ENCODE measurements at regions of chr19 and their contacts with region 1.

Region 1: GRCh38 chr19:4328243-4328990 is 10.2 kb downstream of the STAP2 start:
- DNase-seq: peak; percentile 84 to 100 (median 96)

Region 2: DNA sequence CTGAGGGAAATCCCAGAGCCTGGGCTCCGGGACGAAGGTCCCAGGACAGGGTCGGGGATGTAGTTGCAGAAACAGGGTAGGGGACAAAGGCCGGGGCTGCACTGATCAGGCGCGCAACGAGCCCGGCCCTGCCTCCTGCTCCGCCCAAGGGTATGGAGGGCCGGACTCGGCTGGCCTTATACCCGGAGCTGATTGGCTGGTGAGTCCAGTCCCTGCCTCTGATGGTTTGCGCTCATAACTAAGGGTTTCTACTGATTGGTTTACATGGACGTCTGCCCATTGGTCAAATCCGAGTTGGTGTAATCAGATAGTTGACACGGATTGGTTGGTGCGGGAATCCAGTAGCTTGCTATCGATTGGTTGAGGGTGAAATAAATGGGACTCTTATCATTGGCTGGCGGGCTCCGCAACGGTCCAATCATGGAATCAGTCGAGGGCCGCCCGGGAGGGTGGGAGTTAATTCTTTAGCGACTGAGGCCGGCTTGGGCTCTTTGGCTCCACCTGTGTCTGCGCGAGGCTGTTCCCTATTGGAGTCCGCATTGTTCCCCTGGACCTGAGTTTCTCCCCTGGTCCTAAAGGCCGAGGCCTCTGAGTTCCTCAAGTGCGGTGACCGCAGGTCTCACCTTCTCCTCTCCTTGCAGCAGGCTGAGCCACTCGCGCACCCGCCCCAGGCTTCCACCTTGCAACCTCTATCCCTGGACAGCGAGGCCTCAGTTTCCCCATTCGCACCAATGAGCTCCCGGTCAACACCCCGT is 14.4 kb after region 1 on chr19:
- intact Hi-C with region 1: loop called (anchors 2 kb)
- DNase-seq: peak; percentile 87 to 99 (median 98)

Measured in head of caudate nucleus (tissue), 42 donors.